ENCODE measurements at regions of chr6 and their contacts with region 1.

Region 1: GRCh38 chr6:167141667-167142432 is 15.9 kb downstream of the GPR31 start:
- DNase-seq: peak; percentile 82
- CTCF ChIP-seq: peak; percentile 95

Region 2: DNA sequence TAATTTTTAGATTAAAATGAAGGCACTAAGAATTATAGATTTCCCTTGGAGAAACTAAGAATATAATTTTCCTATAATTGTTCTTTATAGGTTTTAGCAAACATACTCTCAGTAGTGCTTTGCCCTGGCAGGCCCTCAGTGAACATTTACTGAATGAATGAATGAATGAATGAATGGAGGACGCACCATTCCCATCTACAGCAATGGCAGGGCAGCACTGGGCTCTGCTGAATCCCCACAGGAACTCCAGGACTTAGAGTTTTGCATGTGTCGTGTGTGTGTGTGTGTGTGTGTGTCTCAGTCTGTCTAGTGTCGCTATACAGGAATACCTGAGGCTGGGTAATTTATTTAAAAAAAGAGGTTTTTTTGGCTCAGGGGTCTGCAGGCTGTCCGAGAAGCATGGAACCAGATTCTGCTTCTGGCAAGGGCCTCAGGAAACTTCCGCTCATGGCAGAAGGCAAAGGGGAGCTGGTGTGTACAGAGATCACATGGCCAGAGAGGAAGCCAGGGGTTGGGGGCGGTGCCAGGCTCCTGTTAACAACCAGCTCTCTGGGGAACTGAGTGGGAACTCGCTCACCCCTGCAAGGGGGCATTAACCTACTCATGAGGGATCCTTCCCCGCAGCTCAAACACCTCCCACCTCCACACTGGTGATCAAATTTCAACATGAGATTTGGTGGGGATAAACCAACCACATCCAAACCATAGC is 205.6 kb before region 1 on chr6:
- CTCF ChIA-PET with region 1: no interaction called
- POLR2A ChIA-PET with region 1: no interaction called
- DNase-seq: no peak
- CTCF ChIP-seq: no peak

Region 3: DNA sequence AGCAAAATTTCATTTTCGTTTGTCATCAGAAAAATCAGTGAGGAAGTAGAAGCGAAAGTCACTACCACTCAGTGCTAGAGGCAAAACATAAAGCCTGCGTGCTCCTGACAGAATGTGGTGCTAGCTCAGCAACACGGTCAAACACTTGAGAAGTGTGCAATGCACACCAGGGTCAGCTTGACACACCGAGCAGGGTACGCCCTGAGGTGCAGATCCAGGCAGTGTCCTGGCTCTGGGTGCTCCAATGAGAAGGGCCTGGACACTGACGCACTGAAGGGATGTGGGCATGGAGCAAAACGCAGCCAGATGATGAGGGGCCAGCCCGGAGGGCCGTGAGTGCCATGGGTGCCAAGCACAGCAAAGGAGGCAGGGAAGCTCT is 191.4 kb before region 1 on chr6:
- CTCF ChIA-PET with region 1: interaction called, 12 read pairs
- POLR2A ChIA-PET with region 1: no interaction called
- DNase-seq: peak; percentile 71
- CTCF ChIP-seq: no peak

Region 4: GRCh38 chr6:167047554-167047953 is 94.3 kb before region 1 on chr6:
- CTCF ChIA-PET with region 1: interaction called, 13 read pairs
- POLR2A ChIA-PET with region 1: no interaction called
- DNase-seq: peak; percentile 79
- CTCF ChIP-seq: no peak

Region 5: GRCh38 chr6:167130008-167130677 is 11.7 kb before region 1 on chr6:
- CTCF ChIA-PET with region 1: interaction called, 135 read pairs
- POLR2A ChIA-PET with region 1: no interaction called
- DNase-seq: peak; percentile 65
- CTCF ChIP-seq: no peak

Measured in GM10248 (cell line).